ENCODE measurements at regions of chr1 and their contacts with region 1.

Region 1: DNA sequence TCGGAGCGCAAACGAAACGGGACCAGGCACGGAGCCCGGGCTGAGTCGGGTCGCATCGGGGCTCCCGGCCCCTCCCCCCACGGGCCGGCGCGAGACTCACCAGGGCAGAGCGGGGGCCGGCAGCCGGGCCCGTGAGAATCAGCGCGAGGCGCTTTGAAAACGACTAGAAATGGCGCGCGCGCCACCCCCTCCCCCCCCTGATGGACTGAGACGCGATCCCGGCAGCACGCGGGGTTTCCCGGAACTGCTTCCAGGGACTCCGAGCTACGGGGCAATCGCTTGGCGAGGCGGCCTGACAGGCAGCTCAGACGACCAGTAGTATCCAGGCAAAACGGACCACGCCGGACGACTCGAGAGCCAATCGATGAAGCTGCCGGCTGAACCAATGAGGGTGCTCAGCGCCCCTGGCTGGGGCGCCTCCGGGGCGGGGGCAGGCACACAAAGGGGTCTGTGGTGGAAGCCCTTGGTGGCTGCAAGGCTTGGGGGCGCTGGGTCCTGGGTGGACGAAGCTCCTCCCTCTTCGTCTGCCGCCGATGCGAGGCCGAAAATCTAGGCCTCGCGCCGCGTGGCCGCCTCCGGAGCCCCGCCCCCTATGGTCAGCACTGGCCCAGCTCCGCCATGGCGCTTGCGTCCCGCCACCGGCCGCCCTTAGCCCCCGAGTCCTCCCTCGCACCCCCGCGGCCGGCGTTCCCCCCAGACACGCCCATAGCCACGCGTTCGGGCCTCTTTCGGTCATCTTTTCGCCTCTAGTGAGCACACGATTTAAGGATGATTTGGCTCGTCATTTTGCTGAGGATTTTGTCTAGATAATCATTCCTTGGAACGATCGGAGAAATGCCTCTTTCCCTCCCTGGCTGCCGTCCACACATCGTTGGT is at the start of gene HNRNPR:
- DNase-seq: peak; percentile 95
- ATAC-seq: peak; percentile 99
- H3K4me3 Mint-ChIP-seq: peak within 1 kb of the TSS; percentile 98
- H3K27ac Mint-ChIP-seq: peak within 1 kb of the TSS; percentile 98
- H3K4me1 Mint-ChIP-seq: peaks cover 37% of the 10 kb centered on the region
- H3K27me3 Mint-ChIP-seq: no peaks in the 10 kb centered on the region
- total RNA-seq, gene HNRNPR: 167 TPM

Region 2: GRCh38 chr1:23362218-23362713 is 17.9 kb after region 1 on chr1:
- POLR2A ChIA-PET with region 1: interaction called, 97 read pairs
- DNase-seq: no peak
- ATAC-seq: no peak
- H3K4me3 Mint-ChIP-seq: no peak overlapping the region
- H3K27ac Mint-ChIP-seq: no peak overlapping the region
- H3K4me1 Mint-ChIP-seq: peaks cover 9% of the 10 kb centered on the region
- H3K27me3 Mint-ChIP-seq: no peaks in the 10 kb centered on the region

Region 3: GRCh38 chr1:23367791-23368561 is 23.6 kb after region 1 on chr1:
- POLR2A ChIA-PET with region 1: interaction called, 97 read pairs
- DNase-seq: peak; percentile 93
- ATAC-seq: peak; percentile 92
- H3K4me3 Mint-ChIP-seq: peak overlapping the region; percentile 97
- H3K27ac Mint-ChIP-seq: peak overlapping the region; percentile 98
- H3K4me1 Mint-ChIP-seq: peaks cover 23% of the 10 kb centered on the region
- H3K27me3 Mint-ChIP-seq: no peaks in the 10 kb centered on the region

Region 4: GRCh38 chr1:23422241-23423030 is 78.1 kb after region 1 on chr1:
- POLR2A ChIA-PET with region 1: interaction called, 20 read pairs
- DNase-seq: peak; percentile 67
- ATAC-seq: peak; percentile 96
- H3K4me3 Mint-ChIP-seq: peak overlapping the region; percentile 88
- H3K27ac Mint-ChIP-seq: peak overlapping the region; percentile 89
- H3K4me1 Mint-ChIP-seq: peaks cover 28% of the 10 kb centered on the region
- H3K27me3 Mint-ChIP-seq: peaks cover 11% of the 10 kb centered on the region

Region 5: GRCh38 chr1:23875382-23875781 is 531.0 kb after region 1 on chr1:
- POLR2A ChIA-PET with region 1: no interaction called
- DNase-seq: no peak
- ATAC-seq: no peak
- H3K4me3 Mint-ChIP-seq: no peak overlapping the region
- H3K27ac Mint-ChIP-seq: no peak overlapping the region
- H3K4me1 Mint-ChIP-seq: no peaks in the 10 kb centered on the region
- H3K27me3 Mint-ChIP-seq: peaks cover 2% of the 10 kb centered on the region

Measured in activated naive CD8-positive, alpha-beta T cell treated with anti-CD3 and anti-CD28 coated beads, Interleukin-2, amount 10 ng/mL, durations not matched to agents 7 days and 5 days (primary cell).